ENCODE measurements at regions of chr15 and their contacts with region 1.

Region 1: GRCh38 chr15:31228011-31228484 is 98.6 kb upstream of the KLF13 start:
- DNase-seq: no peak
- ATAC-seq: no peak
- H3K4me3 ChIP-seq: no peak overlapping the region
- H3K27ac ChIP-seq: no peak overlapping the region
- H3K4me1 ChIP-seq: no peaks in the 10 kb centered on the region
- H3K27me3 ChIP-seq: peaks cover 8% of the 10 kb centered on the region
- CTCF ChIP-seq: no peak

Region 2: GRCh38 chr15:31163746-31164563 is 64.1 kb before region 1 on chr15:
- CTCF ChIA-PET with region 1: no interaction called
- POLR2A ChIA-PET with region 1: no interaction called
- intact Hi-C with region 1: no loop called
- DNase-seq: peak; percentile 8
- ATAC-seq: no peak
- H3K4me3 ChIP-seq: no peak overlapping the region
- H3K27ac ChIP-seq: no peak overlapping the region
- H3K4me1 ChIP-seq: no peaks in the 10 kb centered on the region
- H3K27me3 ChIP-seq: peaks cover 45% of the 10 kb centered on the region
- CTCF ChIP-seq: no peak

Region 3: DNA sequence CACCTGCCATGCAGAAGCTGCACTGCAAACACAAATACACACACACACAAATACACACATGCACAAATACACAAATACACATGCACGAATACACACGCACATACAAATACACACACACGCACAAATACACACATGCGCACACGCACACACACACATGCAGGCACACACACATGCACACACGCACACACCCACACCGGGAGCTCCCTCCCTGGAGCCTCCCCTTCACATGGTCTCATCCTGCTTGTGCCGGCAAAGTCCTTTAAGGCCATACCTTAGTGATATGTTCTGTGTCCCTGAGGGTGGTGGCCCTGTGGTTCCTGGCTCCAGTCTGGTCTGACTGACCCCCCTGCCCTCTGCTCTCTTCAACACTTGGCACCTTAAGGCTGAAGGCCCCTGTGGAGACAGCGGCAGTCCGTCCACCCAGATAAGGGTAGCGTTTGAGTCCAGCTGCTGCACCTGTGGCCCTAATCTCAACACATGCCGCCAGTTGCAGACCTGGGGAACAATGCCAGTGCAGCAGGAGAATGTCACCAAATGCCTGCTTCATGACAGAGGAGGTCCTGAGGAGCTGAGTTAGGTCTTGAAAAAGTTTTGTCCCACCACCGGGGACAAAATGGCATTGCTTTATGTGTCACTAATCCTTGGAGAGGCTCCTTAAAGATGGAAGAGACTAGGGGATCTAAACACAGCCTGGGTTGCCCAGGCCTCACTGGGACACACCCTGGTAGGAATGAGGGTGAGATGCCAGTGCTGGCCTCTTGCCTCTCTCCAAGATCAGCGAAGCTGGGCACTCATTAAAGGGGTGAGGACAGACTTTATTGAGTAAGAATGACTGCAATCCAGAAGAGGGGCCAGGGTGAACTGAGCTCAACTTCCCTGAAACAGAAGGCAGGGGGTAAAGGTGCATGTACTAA is 39.8 kb after region 1 on chr15:
- CTCF ChIA-PET with region 1: no interaction called
- POLR2A ChIA-PET with region 1: interaction called, 23 read pairs
- intact Hi-C with region 1: no loop called
- DNase-seq: no peak
- ATAC-seq: no peak
- H3K4me3 ChIP-seq: no peak overlapping the region
- H3K27ac ChIP-seq: no peak overlapping the region
- H3K4me1 ChIP-seq: no peaks in the 10 kb centered on the region
- H3K27me3 ChIP-seq: no peaks in the 10 kb centered on the region
- CTCF ChIP-seq: no peak

Measured in PC-3 (cell line).